Aorta (tissue), 5 donors: ENCODE measurements at regions of chr1 and their contacts with region 1.

Region 1: GRCh38 chr1:113042285-113043143 is 30.5 kb upstream of the LRIG2 start:
- DNase-seq: peak; percentile 83 to 90
- ATAC-seq: peak; percentile 91
- H3K4me3 ChIP-seq: no peak overlapping the region
- H3K27ac ChIP-seq: no peak overlapping the region
- H3K4me1 ChIP-seq: no peaks in the 10 kb centered on the region
- H3K27me3 ChIP-seq: no peaks in the 10 kb centered on the region

Region 2: GRCh38 chr1:112809253-112809684 is 233.2 kb before region 1 on chr1:
- intact Hi-C with region 1: loop called (anchors 5 kb)
- DNase-seq: peak; percentile 84 to 91
- ATAC-seq: peak; percentile 75
- H3K4me3 ChIP-seq: no peak overlapping the region
- H3K27ac ChIP-seq: no peak overlapping the region
- H3K4me1 ChIP-seq: no peaks in the 10 kb centered on the region
- H3K27me3 ChIP-seq: no peaks in the 10 kb centered on the region

Region 3: GRCh38 chr1:112881742-112882127 is 160.8 kb before region 1 on chr1:
- intact Hi-C with region 1: loop called (anchors 1 to 2 kb)
- DNase-seq: no peak
- ATAC-seq: no peak
- H3K4me3 ChIP-seq: no peak overlapping the region
- H3K27ac ChIP-seq: no peak overlapping the region
- H3K4me1 ChIP-seq: no peaks in the 10 kb centered on the region
- H3K27me3 ChIP-seq: no peaks in the 10 kb centered on the region

Region 4: GRCh38 chr1:112955781-112956543 is 86.6 kb before region 1 on chr1 and contains the start of gene SLC16A1:
- intact Hi-C with region 1: loop called in 1 of 2 experiments (anchors 5 kb)
- DNase-seq: peak; percentile 96 to 97
- ATAC-seq: peak; percentile 96
- H3K4me3 ChIP-seq: peak within 1 kb of the TSS; percentile 51 to 56
- H3K27ac ChIP-seq: peak within 1 kb of the TSS; percentile 20 to 71
- H3K4me1 ChIP-seq: no peaks in the 10 kb centered on the region
- H3K27me3 ChIP-seq: no peaks in the 10 kb centered on the region
- total RNA-seq, gene SLC16A1: 30.3 to 32.4 TPM

Region 5: GRCh38 chr1:112998592-112999235 is 43.8 kb before region 1 on chr1:
- intact Hi-C with region 1: no loop called
- DNase-seq: peak; percentile 84 to 85
- ATAC-seq: peak; percentile 81
- H3K4me3 ChIP-seq: no peak overlapping the region
- H3K27ac ChIP-seq: peak overlapping the region; percentile 77 to 99
- H3K4me1 ChIP-seq: peaks cover 7% of the 10 kb centered on the region in 2 donors
- H3K27me3 ChIP-seq: no peaks in the 10 kb centered on the region